SK-N-SH (cell line): ENCODE measurements at regions of chr2 and their contacts with region 1.

Region 1: DNA sequence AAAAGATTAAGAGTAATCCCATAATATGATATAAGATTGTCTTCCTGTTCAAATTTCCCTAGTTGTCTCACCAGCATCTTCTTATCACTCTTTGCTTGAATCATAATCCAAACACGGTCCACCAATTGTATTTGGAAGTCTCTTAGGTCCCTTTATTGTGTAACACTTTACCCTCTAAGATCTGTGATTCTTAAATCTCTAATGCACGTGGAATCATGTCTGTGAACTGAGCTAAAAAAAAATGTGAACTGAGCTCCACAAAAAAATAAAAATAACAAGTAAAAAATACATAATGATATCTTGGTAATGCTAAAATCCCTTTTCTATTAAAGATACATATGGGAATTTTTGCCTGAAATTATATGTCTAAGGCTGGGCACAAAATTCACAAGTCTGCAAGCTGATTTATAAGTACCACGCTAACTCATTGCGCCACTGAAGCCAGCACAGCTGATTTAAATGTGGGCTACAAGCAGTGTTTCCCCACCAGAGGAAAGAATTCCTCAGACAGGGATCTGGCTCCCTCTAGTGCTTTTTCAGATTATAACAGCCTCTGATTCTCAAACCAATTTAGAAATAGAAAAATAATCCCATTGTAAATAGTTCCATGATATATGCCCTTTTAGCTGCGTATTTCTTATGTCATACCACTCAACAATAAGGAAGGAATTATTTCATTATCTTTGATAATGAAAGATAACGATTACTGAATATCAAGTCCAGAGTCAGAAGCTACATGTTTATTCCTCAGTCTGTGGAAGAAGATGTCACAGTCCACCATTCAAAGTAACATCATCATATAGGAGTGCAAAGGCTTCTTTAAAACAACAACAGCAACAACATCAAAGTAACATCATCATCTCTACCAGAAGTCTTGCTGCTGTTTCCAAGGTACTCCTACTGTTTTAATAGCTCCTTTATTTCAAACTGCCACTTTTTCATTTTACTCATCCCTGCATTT is 22.9 kb downstream of the RBM43 start:
- DNase-seq: peak; percentile 71
- H3K4me3 ChIP-seq: peak overlapping the region in 1 of 2 experiments; percentile 2; a peak in 1 of 4 replicates
- H3K27ac ChIP-seq: peak overlapping the region in 1 of 2 experiments; percentile 73; a peak in 2 of 4 replicates
- H3K4me1 ChIP-seq: peaks cover 4 to 12% of the 10 kb centered on the region in 2 experiments; a peak in 3 of 4 replicates
- H3K27me3 ChIP-seq: no peaks in the 10 kb centered on the region
- CTCF ChIP-seq: peak; percentile 89
- EP300 ChIP-seq: no peak
- RAD21 ChIP-seq: peak; percentile 100

Region 2: GRCh38 chr2:149597668-149598326 is 1641.0 kb before region 1 on chr2:
- CTCF ChIA-PET with region 1: interaction called, 120 read pairs
- POLR2A ChIA-PET with region 1: no interaction called
- DNase-seq: peak; percentile 50
- H3K4me3 ChIP-seq: peak overlapping the region; percentile 30 to 31; a peak in 3 of 4 replicates
- H3K27ac ChIP-seq: peak overlapping the region; percentile 48 to 53; a peak in 3 of 4 replicates
- H3K4me1 ChIP-seq: peaks cover 0 to 6% of the 10 kb centered on the region in 2 experiments; a peak in 2 of 4 replicates
- H3K27me3 ChIP-seq: no peaks in the 10 kb centered on the region
- CTCF ChIP-seq: peak; percentile 84
- EP300 ChIP-seq: peak in 1 of 2 experiments; percentile 56; a peak in 2 of 4 replicates
- RAD21 ChIP-seq: peak; percentile 96

Region 3: DNA sequence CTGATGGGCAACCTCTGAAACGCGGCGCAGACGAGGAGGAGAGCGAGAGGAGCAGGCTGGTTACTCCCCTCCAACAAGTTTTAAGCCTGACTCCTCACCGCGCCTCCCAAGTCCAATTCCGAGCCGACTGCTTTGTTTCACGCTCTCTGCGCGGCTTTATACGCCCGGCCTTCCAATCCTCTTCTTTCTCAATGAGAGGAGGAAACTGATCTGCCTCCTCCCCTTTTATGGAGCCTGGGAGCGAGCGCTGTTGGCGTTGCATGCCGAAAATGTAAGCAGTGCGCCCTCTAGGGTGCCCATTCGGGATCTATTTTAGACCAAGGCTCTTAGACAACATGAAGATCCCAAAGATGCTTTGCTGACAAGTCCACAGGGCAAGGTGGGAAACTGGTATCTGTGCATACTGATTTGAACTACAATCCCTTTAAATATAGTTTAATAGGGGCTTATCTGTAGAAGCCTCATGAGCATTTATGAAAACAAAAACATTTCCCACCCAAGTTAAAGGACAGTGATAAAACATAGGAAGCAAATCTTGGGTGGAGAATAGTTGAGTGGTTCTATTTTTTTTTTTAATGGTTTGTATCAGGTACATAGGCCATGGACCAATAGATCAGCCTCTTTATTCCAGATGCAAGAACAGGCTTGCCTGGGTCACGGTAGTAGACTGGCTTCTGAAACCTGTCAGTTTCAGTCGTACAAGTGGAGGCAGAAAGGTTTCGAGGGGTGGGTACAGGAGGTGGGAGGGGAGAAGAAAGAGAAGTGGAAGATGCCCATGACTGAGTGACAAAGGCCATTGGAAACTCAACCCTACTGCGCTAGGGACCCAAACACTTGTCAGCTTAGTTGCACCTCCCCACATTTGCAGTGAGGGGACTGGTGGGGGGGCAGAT is 751.0 kb before region 1 on chr2 and contains the start of gene RND3:
- CTCF ChIA-PET with region 1: interaction called, 14 read pairs
- POLR2A ChIA-PET with region 1: interaction called, 3 read pairs
- DNase-seq: peak; percentile 86
- H3K4me3 ChIP-seq: peak within 1 kb of the TSS; percentile 90 to 98
- H3K27ac ChIP-seq: peak within 1 kb of the TSS; percentile 90 to 92
- H3K4me1 ChIP-seq: peaks cover 17 to 27% of the 10 kb centered on the region in 2 experiments; a peak in 3 of 4 replicates
- H3K27me3 ChIP-seq: no peaks in the 10 kb centered on the region
- CTCF ChIP-seq: peak; percentile 92
- EP300 ChIP-seq: peak in 1 of 2 experiments; percentile 49; a peak in 2 of 4 replicates
- RAD21 ChIP-seq: peak; percentile 90
- polyA plus RNA-seq, gene RND3: 49.7 and 56.7 TPM in 2 replicates

Region 4: DNA sequence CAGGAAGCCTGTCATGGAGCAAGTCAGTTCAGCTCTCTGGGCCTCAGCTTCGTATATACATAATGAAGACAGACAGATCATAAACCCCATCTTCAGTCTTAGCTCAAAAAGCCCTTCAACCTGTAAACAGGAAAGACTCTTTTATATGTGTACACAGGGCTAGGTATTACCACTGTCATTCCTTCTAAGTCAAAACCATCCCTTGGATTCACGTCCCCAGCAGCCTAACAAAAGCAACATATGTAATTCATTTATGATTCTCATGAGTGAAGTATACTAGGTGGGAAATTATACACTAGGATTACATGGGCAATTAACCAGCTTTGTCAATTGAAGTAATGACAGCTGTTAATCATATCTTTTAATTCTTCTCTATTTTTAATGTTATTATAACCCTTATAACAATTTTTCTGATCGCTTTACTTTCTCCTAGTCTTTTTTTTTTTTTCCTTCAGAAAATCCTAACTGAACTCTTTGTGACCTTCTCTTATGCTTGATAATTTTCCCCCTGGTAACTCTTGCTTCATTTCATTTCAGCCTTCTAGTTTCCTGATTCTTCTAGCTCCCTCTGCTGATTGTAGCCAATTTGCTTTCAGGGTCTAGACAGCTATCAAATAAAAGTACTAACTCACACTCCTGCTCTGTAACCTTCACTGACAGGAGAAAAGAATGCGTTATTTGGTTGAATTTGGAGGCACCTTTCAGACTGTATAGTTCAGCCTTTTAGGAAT is 76.8 kb before region 1 on chr2:
- CTCF ChIA-PET with region 1: interaction called, 12 read pairs
- POLR2A ChIA-PET with region 1: no interaction called
- DNase-seq: no peak
- H3K4me3 ChIP-seq: no peak overlapping the region
- H3K27ac ChIP-seq: peak overlapping the region in 1 of 2 experiments; percentile 73; a peak in 2 of 4 replicates
- H3K4me1 ChIP-seq: peaks cover 0 to 17% of the 10 kb centered on the region in 2 experiments; a peak in 2 of 4 replicates
- H3K27me3 ChIP-seq: no peaks in the 10 kb centered on the region
- CTCF ChIP-seq: peak; percentile 52
- EP300 ChIP-seq: 0 out of 4 replicates have a peak, but pooled peaks of 1 of the 2 experiments have one; percentile 10
- RAD21 ChIP-seq: peak; percentile 79